ENCODE measurements at regions of chr1 and their contacts with region 1.

Region 1: GRCh38 chr1:40032240-40032891 is 8.2 kb upstream of the CAP1 start:
- DNase-seq: peak; percentile 74
- H3K4me3 ChIP-seq: no peak overlapping the region
- H3K27ac ChIP-seq: no peak overlapping the region
- H3K4me1 ChIP-seq: peaks cover 3% of the 10 kb centered on the region
- H3K27me3 ChIP-seq: no peaks in the 10 kb centered on the region
- CTCF ChIP-seq: peak; percentile 59

Region 2: GRCh38 chr1:39919545-39919944 is 112.8 kb before region 1 on chr1:
- intact Hi-C with region 1: loop called (anchors 5 kb)
- DNase-seq: peak; percentile 48
- H3K4me3 ChIP-seq: no peak overlapping the region
- H3K27ac ChIP-seq: no peak overlapping the region
- H3K4me1 ChIP-seq: no peaks in the 10 kb centered on the region
- H3K27me3 ChIP-seq: no peaks in the 10 kb centered on the region
- CTCF ChIP-seq: peak; percentile 54

Region 3: GRCh38 chr1:40161125-40161887 is 128.9 kb after region 1 on chr1 and contains the start of gene RLF:
- intact Hi-C with region 1: no loop called
- DNase-seq: peak; percentile 95
- H3K4me3 ChIP-seq: peak within 1 kb of the TSS; percentile 78
- H3K27ac ChIP-seq: peak within 1 kb of the TSS; percentile 90
- H3K4me1 ChIP-seq: peaks cover 4% of the 10 kb centered on the region
- H3K27me3 ChIP-seq: no peaks in the 10 kb centered on the region
- CTCF ChIP-seq: no peak
- total RNA-seq, gene RLF: 11.5 to 21.0 TPM